ENCODE measurements at regions of chr3 and their contacts with region 1.

Region 1: GRCh38 chr3:120604784-120605183 is 8.6 kb downstream of the NDUFB4 start:
- DNase-seq: no peak
- ATAC-seq: peak; percentile 56
- H3K4me3 ChIP-seq: no peak overlapping the region
- H3K27ac ChIP-seq: no peak overlapping the region
- H3K4me1 ChIP-seq: no peaks in the 10 kb centered on the region
- H3K27me3 ChIP-seq: no peaks in the 10 kb centered on the region
- CTCF ChIP-seq: no peak
- EP300 ChIP-seq: no peak
- POLR2A ChIP-seq: no peak
- RAD21 ChIP-seq: no peak

Region 2: DNA sequence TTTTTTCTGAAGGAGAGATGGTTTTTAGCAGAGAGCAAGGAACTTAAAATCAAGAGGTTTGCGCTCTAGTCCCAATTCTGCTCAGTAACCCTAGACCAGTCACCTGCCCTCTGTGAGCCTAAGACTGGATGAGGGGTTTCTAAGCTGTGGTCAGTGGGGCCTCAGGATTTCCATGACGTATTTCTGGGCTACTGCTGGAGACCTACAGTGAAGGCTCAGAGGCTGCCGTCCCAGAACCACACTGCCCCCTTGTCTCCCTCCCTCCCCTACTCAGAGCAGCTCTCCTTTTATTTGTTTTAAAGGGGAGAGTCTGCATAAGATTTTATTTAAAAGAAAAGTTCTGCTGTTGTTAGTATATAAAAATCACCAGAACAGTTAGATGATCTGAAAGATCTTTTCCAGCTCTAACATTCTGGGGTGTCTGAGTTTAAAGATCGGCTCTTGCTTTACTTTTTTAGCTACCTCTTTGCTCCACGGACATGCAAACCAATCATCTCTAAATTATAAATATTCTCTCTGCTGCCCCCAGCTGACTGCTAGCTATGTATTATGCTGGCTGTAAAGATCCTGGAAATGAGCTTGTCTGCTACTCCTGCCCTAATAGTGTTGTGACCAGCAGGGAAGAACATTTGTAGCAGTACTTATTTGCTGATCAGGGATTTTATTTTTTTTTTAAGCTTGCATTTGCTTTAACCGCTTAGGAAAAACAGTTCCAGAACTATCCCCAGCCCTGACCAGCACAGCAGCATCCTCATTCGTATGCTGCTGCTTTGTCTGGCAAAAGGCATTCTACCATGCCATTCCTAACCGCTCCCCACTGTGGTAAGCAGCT is 37.2 kb before region 1 on chr3:
- CTCF ChIA-PET with region 1: interaction called, 10 read pairs
- POLR2A ChIA-PET with region 1: no interaction called
- RAD21 ChIA-PET with region 1: interaction called, 3 read pairs
- SMC1A ChIA-PET with region 1: interaction called, 3 read pairs
- in situ Hi-C with region 1: no loop called
- intact Hi-C with region 1: no loop called
- DNase-seq: no peak
- ATAC-seq: peak; percentile 89
- H3K4me3 ChIP-seq: no peak overlapping the region
- H3K27ac ChIP-seq: no peak overlapping the region
- H3K4me1 ChIP-seq: no peaks in the 10 kb centered on the region
- H3K27me3 ChIP-seq: no peaks in the 10 kb centered on the region
- CTCF ChIP-seq: peak in 2 of 3 experiments; percentile 21 to 34; a peak in 3 of 6 replicates
- EP300 ChIP-seq: no peak
- POLR2A ChIP-seq: no peak
- RAD21 ChIP-seq: no peak

Region 3: GRCh38 chr3:120661118-120661935 is 56.5 kb after region 1 on chr3:
- CTCF ChIA-PET with region 1: no interaction called
- POLR2A ChIA-PET with region 1: no interaction called
- RAD21 ChIA-PET with region 1: no interaction called
- SMC1A ChIA-PET with region 1: no interaction called
- in situ Hi-C with region 1: loop called (anchors 10 kb)
- intact Hi-C with region 1: no loop called
- DNase-seq: no peak
- ATAC-seq: no peak
- H3K4me3 ChIP-seq: no peak overlapping the region
- H3K27ac ChIP-seq: no peak overlapping the region
- H3K4me1 ChIP-seq: no peaks in the 10 kb centered on the region
- H3K27me3 ChIP-seq: no peaks in the 10 kb centered on the region
- CTCF ChIP-seq: no peak
- EP300 ChIP-seq: no peak
- POLR2A ChIP-seq: no peak
- RAD21 ChIP-seq: no peak

Measured in GM12878 (cell line).